Natural killer cell (primary cell): ENCODE measurements at regions of chr3 and their contacts with region 1.

Region 1: GRCh38 chr3:69161587-69162307 is 39.4 kb upstream of the LMOD3 start:
- DNase-seq: peak in 1 of 2 donors; percentile 75
- ATAC-seq: peak; percentile 78 to 91 (median 87)
- H3K4me3 ChIP-seq: no peak overlapping the region
- H3K4me3 Mint-ChIP-seq: no peak overlapping the region
- H3K27ac ChIP-seq: no peak overlapping the region
- H3K27ac Mint-ChIP-seq: no peak overlapping the region
- H3K4me1 ChIP-seq: no peaks in the 10 kb centered on the region
- H3K4me1 Mint-ChIP-seq: peaks cover 0 to 6% of the 10 kb centered on the region in 2 donors
- H3K27me3 ChIP-seq: no peaks in the 10 kb centered on the region
- H3K27me3 Mint-ChIP-seq: no peaks in the 10 kb centered on the region
- CTCF ChIP-seq: peak; percentile 97

Region 2: GRCh38 chr3:69013253-69014021 is 148.3 kb before region 1 on chr3 and contains the start of gene EOGT:
- intact Hi-C with region 1: no loop called
- DNase-seq: peak; percentile 70 to 86
- ATAC-seq: peak; percentile 82 to 87 (median 84)
- H3K4me3 ChIP-seq: peak within 1 kb of the TSS; percentile 89
- H3K4me3 Mint-ChIP-seq: peak within 1 kb of the TSS; percentile 92
- H3K27ac ChIP-seq: peak within 1 kb of the TSS; percentile 54
- H3K27ac Mint-ChIP-seq: peak within 1 kb of the TSS; percentile 57 to 82
- H3K4me1 ChIP-seq: peaks cover 7% of the 10 kb centered on the region
- H3K4me1 Mint-ChIP-seq: peaks cover 6 to 16% of the 10 kb centered on the region in 2 donors
- H3K27me3 ChIP-seq: no peaks in the 10 kb centered on the region
- H3K27me3 Mint-ChIP-seq: no peaks in the 10 kb centered on the region
- CTCF ChIP-seq: peak; percentile 43
- total RNA-seq, gene EOGT: 8.4 to 11.6 (median 10.8) TPM

Region 3: DNA sequence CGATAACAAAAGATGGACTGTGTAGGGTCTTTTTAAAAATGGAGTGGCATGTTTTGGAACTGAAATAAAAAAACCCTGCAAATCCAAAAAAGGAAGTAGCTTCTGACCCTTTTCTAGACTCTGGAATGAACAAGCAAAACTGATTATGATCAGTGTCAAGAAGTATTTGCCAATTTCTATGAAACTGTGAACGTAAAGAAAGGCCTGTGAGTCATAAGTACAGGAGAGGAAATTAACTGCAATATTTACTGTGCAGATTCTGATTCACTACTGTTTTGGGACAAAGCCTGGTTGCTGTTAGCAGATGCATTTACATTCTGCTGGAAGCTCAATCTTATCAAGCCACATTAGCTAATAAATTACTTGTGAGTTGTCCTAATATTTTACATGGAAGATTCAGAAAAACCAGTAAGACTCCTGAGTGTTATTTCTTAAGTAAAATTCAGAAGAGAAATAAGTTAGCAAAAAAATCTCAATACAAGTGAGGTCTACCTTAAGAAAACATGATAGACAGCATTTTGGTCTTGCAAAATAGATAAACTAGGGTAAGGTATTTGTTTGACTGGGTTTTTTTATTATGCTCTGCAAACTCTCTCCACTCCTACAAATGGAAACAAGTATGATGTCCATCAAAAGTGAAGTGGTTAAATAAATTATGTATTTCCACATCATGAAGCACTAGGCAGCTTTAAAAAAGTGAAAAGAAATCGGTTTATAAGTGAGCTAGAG is 50.8 kb after region 1 on chr3:
- intact Hi-C with region 1: no loop called
- DNase-seq: peak in 1 of 2 donors; percentile 15
- ATAC-seq: peak; percentile 18 to 68 (median 61)
- H3K4me3 ChIP-seq: no peak overlapping the region
- H3K4me3 Mint-ChIP-seq: no peak overlapping the region
- H3K27ac ChIP-seq: no peak overlapping the region
- H3K27ac Mint-ChIP-seq: peak overlapping the region in 1 of 2 donors; percentile 45
- H3K4me1 ChIP-seq: no peaks in the 10 kb centered on the region
- H3K4me1 Mint-ChIP-seq: peaks cover 6% of the 10 kb centered on the region in 2 donors
- H3K27me3 ChIP-seq: no peaks in the 10 kb centered on the region
- H3K27me3 Mint-ChIP-seq: no peaks in the 10 kb centered on the region
- CTCF ChIP-seq: no peak

Region 4: GRCh38 chr3:69306239-69307185 is 144.8 kb after region 1 on chr3:
- intact Hi-C with region 1: loop called (anchors 1 kb)
- DNase-seq: peak; percentile 36 to 89
- ATAC-seq: peak; percentile 96 to 100 (median 100)
- H3K4me3 ChIP-seq: no peak overlapping the region
- H3K4me3 Mint-ChIP-seq: no peak overlapping the region
- H3K27ac ChIP-seq: no peak overlapping the region
- H3K27ac Mint-ChIP-seq: no peak overlapping the region
- H3K4me1 ChIP-seq: no peaks in the 10 kb centered on the region
- H3K4me1 Mint-ChIP-seq: peaks cover 8% of the 10 kb centered on the region in 2 donors
- H3K27me3 ChIP-seq: no peaks in the 10 kb centered on the region
- H3K27me3 Mint-ChIP-seq: no peaks in the 10 kb centered on the region
- CTCF ChIP-seq: peak; percentile 97

Region 5: DNA sequence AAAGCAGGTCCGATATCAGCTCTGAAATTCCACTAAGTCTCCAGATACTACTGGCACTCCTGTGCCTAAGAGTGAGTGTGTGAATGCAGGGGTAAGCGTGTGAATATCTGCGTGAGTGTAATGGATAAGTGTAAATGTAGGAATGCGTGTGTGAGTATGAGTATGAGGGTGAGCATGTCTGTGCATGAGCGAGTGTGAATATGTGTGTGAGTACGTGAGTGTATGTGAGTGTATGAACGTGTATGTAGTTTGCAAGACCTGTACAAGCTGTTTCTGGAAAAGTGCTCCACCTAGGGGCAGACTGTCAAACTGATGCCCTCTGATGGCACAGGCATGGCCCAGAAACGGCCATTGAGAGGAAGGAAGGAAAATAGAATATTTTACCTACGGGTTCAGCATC is 248.5 kb after region 1 on chr3:
- intact Hi-C with region 1: loop called (anchors 1 kb)
- DNase-seq: peak; percentile 43 to 79
- ATAC-seq: peak; percentile 86 to 99 (median 98)
- H3K4me3 ChIP-seq: no peak overlapping the region
- H3K4me3 Mint-ChIP-seq: no peak overlapping the region
- H3K27ac ChIP-seq: no peak overlapping the region
- H3K27ac Mint-ChIP-seq: no peak overlapping the region
- H3K4me1 ChIP-seq: no peaks in the 10 kb centered on the region
- H3K4me1 Mint-ChIP-seq: peaks cover 0 to 6% of the 10 kb centered on the region in 2 donors
- H3K27me3 ChIP-seq: no peaks in the 10 kb centered on the region
- H3K27me3 Mint-ChIP-seq: peaks cover 0 to 3% of the 10 kb centered on the region in 2 donors
- CTCF ChIP-seq: peak; percentile 88

Region 6: GRCh38 chr3:69425261-69425660 is 263.5 kb after region 1 on chr3:
- intact Hi-C with region 1: loop called (anchors 1 kb)
- DNase-seq: peak in 1 of 2 donors; percentile 56
- ATAC-seq: peak in 2 of 3 donors; percentile 55 to 73
- H3K4me3 ChIP-seq: no peak overlapping the region
- H3K4me3 Mint-ChIP-seq: no peak overlapping the region
- H3K27ac ChIP-seq: no peak overlapping the region
- H3K27ac Mint-ChIP-seq: no peak overlapping the region
- H3K4me1 ChIP-seq: no peaks in the 10 kb centered on the region
- H3K4me1 Mint-ChIP-seq: no peaks in the 10 kb centered on the region
- H3K27me3 ChIP-seq: no peaks in the 10 kb centered on the region
- H3K27me3 Mint-ChIP-seq: peaks cover 2 to 3% of the 10 kb centered on the region in 2 donors
- CTCF ChIP-seq: peak; percentile 44

Region 7: GRCh38 chr3:69439643-69440270 is 278.0 kb after region 1 on chr3:
- intact Hi-C with region 1: no loop called
- DNase-seq: peak in 1 of 2 donors; percentile 27
- ATAC-seq: peak in 1 of 3 donors; percentile 46
- H3K4me3 ChIP-seq: no peak overlapping the region
- H3K4me3 Mint-ChIP-seq: no peak overlapping the region
- H3K27ac ChIP-seq: no peak overlapping the region
- H3K27ac Mint-ChIP-seq: no peak overlapping the region
- H3K4me1 ChIP-seq: no peaks in the 10 kb centered on the region
- H3K4me1 Mint-ChIP-seq: peaks cover 5 to 6% of the 10 kb centered on the region in 2 donors
- H3K27me3 ChIP-seq: no peaks in the 10 kb centered on the region
- H3K27me3 Mint-ChIP-seq: peaks cover 0 to 2% of the 10 kb centered on the region in 2 donors
- CTCF ChIP-seq: peak; percentile 42